ENCODE measurements at regions of chr15 and their contacts with region 1.

Region 1: DNA sequence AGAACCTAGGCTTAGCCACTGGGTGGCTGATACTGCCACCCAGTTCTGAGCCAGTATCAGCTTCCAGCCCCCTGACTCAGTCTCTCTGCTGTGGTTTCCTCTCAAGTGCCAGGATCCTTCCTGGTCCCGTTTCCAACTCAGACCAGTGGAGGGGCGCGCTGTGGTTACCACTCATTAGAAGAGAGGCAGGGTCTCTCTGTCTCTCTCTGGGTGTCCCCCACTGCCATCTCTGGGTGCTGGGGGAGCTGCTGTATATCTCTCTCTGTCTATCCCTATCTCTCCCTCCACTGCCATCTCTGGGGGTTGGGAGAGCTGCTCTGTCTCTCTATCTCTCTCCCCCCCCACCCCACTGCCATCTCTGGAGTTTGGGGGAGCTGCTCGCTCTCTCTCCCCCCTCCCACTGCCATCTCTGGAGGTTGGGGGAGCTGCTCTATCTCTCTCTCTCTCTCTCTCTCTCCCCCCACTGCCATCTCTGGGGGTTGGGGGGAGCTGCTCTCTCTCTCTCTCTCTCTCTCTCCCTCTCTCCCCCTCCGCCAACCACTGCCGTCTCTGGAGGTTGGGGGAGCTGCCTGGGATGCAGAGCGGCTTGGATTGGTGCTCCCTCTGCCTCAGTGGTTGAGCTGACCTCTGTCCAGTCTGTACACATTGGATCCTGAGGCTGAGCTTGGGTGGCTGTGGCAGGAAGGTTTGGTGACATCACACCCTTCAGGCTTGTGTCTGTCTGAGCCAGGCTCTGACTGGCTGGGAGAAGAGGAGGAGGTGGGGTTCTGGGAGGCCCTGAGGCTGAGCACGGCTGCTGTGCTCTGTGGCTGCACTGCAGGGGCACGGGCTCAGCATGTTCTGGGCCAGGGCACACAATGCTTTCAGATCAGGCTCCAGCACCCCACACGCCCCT is 98.9 kb downstream of the APBA2 start:
- DNase-seq: no peak
- H3K4me3 ChIP-seq: no peak overlapping the region
- H3K27ac ChIP-seq: no peak overlapping the region; the same call in 1 of the 2 replicates
- H3K4me1 ChIP-seq: peaks cover 2 to 6% (median 5%) of the 10 kb centered on the region in 4 experiments; a peak in 6 of 7 replicates
- H3K27me3 ChIP-seq: no peaks in the 10 kb centered on the region; a peak in 1 of 7 replicates
- CTCF ChIP-seq: no peak
- EP300 ChIP-seq: no peak
- POLR2A ChIP-seq: no peak
- RAD21 ChIP-seq: no peak

Region 2: DNA sequence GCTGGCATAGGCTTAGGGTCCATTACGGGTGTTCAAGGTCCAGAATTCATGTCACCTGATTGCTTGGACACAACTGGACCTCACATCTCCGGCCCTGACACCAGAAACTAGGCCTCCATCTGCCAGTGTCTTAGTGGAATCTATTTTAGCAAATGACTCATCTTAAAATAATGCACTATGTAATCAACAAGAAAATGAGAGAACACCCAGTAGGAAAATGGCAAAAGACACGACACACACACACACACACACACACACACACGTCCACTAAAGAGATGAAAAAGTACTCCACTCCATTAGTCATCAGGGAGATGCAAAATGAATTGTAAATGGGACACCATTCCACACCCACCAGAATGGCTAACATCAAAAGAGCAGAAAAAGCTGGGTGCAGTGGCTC is 87.7 kb before region 1 on chr15:
- CTCF ChIA-PET with region 1: no interaction called
- POLR2A ChIA-PET with region 1: no interaction called
- DNase-seq: no peak
- H3K4me3 ChIP-seq: no peak overlapping the region
- H3K27ac ChIP-seq: no peak overlapping the region
- H3K4me1 ChIP-seq: peaks cover 0 to 2% (median 0%) of the 10 kb centered on the region in 4 experiments; a peak in 3 of 7 replicates
- H3K27me3 ChIP-seq: no peaks in the 10 kb centered on the region
- CTCF ChIP-seq: no peak
- EP300 ChIP-seq: no peak
- POLR2A ChIP-seq: no peak
- RAD21 ChIP-seq: no peak

Region 3: DNA sequence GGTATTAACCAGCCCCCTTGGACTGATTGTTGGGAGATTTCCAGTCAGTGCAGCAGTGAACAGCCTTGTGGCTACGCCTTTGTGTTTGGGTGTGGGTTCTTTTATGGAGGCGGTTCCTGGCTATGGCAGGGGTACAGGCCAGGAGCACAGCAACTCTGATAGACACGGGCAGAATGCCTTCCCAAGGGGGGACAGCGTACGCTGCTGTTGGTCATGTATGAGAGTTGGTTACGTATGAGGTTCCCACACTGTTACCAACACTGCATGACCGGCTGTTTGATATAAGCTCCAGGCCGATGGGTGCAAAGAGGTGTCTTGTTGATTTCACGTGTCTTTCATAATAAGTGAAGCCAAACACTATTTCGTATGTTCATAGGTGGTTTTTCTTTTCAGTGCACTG is 97.1 kb after region 1 on chr15:
- CTCF ChIA-PET with region 1: interaction called, 16 read pairs
- POLR2A ChIA-PET with region 1: no interaction called
- DNase-seq: no peak
- H3K4me3 ChIP-seq: no peak overlapping the region
- H3K27ac ChIP-seq: no peak overlapping the region
- H3K4me1 ChIP-seq: 0 out of 7 replicates have a peak, but pooled peaks cover 0 to 2% (median 0%) of the 10 kb centered on the region in 4 experiments
- H3K27me3 ChIP-seq: no peaks in the 10 kb centered on the region
- CTCF ChIP-seq: no peak
- EP300 ChIP-seq: no peak
- POLR2A ChIP-seq: no peak
- RAD21 ChIP-seq: no peak

Measured in H1 (cell line).